GM13977 (cell line): ENCODE measurements at regions of chr11 and their contacts with region 1.

Region 1: GRCh38 chr11:59171508-59172322 is at the start of gene DTX4:
- DNase-seq: peak; percentile 86
- CTCF ChIP-seq: peak; percentile 99

Region 2: GRCh38 chr11:58688789-58689503 is 482.8 kb before region 1 on chr11:
- in situ Hi-C with region 1: no loop called
- DNase-seq: no peak
- CTCF ChIP-seq: no peak

Region 3: GRCh38 chr11:58788355-58789023 is 383.2 kb before region 1 on chr11:
- in situ Hi-C with region 1: no loop called
- DNase-seq: peak; percentile 28
- CTCF ChIP-seq: peak; percentile 87

Region 4: DNA sequence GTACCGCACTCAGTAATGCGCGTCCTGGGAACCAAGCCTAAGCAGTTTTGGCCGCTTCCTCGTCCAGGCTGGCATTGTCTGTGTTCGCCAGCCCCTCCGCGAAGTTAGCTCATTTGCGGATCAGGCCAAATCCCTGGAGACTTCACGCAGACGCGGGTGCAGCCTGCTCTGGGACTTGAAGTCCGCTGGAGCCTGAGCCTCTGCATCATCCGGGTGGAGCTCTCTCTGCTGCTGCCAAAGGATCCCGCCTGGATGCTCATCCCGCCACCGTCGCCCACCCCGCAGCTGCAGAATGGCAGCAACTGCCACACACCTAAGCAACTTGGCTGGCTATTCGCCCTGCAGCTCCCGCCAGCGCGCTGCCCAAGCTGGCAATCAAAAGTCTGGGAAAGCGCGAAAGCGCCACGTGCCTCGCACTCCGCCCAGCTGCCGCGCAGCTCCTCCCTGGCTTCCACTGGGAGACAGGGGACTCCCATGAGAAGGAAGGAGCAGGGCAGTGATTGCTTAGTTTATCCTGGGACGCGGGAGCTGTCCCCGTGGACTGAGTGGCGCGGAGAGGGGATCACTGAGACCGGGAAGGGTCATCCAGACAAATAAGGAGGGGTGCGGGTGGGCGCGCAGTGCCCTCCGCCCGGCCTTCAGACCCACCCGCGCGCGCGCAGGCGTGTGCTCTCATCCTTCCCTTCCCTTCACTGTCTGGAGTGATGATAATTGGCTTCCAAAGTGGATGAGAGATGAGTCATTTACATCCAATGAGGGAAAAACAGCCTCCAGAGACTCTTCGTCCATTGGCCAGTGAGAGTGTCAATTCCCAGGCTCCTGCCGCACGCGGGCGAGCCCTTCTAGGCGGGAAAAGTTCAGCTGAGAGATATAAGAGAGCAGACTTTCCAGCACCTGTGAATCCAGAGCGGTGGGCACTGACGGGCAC is 108.8 kb before region 1 on chr11:
- in situ Hi-C with region 1: no loop called
- DNase-seq: no peak
- CTCF ChIP-seq: no peak

Region 5: DNA sequence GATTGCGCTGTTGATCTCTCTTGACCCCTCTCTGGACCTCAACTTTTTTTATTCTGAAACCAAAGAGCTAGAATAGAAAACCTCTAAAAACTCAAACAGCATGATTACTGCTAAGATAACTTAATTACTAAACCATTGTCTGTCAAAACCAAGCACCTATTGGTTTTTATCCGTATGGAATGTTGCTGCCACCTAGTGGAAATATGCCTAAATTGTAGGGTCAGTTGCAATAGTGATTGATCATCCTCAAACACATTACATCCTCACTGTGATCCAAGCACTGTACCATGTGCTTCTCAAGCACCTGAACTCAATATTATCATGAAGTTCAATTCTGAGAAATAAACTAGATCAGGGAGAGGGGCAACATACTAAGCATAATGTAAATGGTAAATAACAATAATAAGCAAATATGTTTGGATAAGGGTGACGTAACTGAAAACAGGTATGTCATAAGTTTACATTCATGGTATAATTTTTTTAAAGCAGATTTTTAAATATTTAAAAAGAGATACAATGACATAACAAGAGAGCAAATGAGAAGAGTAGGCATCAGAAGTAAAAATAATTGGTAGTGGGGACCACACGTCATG is 258.3 kb after region 1 on chr11:
- in situ Hi-C with region 1: loop called (anchors 5 kb)
- DNase-seq: peak; percentile 57
- CTCF ChIP-seq: peak; percentile 66